ENCODE measurements at regions of chr3 and their contacts with region 1.

Region 1: DNA sequence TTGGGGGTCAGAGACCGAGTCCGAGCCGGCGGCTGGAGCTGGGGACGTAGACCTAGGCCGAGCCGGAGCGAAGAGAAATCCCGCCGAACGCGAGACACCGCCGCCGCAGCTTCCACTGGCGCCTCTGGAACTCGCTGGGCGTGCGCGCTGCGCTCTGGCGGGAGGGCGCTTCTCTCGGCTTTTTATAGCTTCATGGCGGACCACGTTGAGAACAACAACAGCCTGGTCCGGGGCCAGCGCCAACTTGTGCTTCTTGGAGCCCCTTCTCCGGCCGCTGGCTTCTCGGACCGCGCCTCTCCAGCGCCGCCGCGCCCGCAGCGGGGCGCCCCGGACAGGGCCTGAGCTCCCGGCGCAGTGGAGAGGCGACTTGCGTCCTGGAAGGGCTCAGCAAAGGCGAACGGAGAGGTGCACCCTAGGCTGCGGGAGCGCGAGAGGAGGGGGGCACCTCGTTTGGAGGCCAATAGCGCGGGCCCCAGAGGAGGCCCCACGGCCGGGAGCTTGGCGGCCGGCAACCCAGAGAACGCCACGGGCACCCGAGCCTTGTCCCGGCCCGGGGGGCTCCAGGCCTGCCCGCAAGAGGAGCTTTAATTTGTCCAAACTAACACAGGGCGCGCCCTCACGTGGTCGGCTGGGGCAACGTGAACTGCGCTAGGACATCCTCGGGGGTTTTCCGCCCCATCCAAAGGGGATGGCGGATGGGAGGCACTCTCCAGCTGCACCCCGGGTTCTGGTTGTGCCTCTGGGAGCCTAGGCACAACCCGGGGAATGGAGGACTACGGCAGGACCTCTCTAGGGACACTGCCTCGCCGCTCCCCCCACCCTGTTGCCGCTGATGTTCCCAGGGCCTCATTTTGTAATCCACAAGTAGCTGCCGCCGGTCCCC is 37.7 kb downstream of the HMCES start:
- DNase-seq: peak; percentile 79 to 91
- H3K4me3 ChIP-seq: peak overlapping the region; percentile 92 to 95
- H3K27ac ChIP-seq: peak overlapping the region; percentile 90 to 95
- H3K4me1 ChIP-seq: peaks cover 5 to 28% (median 20%) of the 10 kb centered on the region in 4 donors
- H3K27me3 ChIP-seq: no peaks in the 10 kb centered on the region
- CTCF ChIP-seq: peak; percentile 20 to 46

Region 2: GRCh38 chr3:129039271-129040038 is 276.9 kb before region 1 on chr3:
- intact Hi-C with region 1: no loop called
- DNase-seq: no peak
- H3K4me3 ChIP-seq: no peak overlapping the region
- H3K27ac ChIP-seq: no peak overlapping the region
- H3K4me1 ChIP-seq: peaks cover 0 to 7% (median 0%) of the 10 kb centered on the region in 4 donors
- H3K27me3 ChIP-seq: peaks cover 0 to 17% of the 10 kb centered on the region in 2 donors
- CTCF ChIP-seq: no peak

Region 3: GRCh38 chr3:129278439-129278970 is 37.9 kb before region 1 on chr3 and contains the start of gene HMCES:
- intact Hi-C with region 1: loop called (anchors 5 kb)
- DNase-seq: peak; percentile 92 to 96
- H3K4me3 ChIP-seq: peak within 1 kb of the TSS; percentile 72 to 89
- H3K27ac ChIP-seq: peak within 1 kb of the TSS; percentile 89 to 96
- H3K4me1 ChIP-seq: peaks cover 0 to 32% (median 19%) of the 10 kb centered on the region in 4 donors
- H3K27me3 ChIP-seq: no peaks in the 10 kb centered on the region
- CTCF ChIP-seq: peak in 1 of 2 experiments; percentile 4

Region 4: DNA sequence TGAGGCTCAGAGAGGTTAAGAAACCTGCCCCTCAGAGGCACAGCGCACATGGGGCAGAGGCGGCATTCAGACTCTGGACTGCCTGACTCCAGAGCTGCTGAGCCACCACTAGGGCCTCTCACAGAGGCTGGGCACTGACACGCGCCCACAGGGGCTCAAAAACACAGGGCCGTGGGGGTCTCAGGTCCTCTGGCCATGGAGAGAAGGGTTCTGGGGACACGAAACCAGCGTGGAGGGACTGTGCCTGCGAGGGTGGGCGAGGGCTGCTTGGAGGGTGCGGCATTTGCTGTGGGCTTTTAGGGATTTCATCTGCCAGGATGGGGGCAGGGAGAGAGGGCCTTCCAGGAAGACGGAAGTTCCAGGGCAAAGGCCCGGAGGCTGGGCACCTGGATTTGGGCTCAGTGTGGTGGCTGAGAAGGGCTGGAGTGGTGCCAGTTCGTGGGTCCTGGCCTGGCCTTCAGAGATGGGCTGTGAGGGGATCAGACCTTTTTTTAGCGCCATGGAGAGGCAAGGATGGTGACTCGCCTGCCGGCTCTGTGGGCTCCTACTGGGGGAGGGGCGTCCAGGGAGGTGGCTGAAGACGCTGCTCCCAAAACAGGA is 42.5 kb after region 1 on chr3:
- intact Hi-C with region 1: no loop called
- DNase-seq: no peak
- H3K4me3 ChIP-seq: no peak overlapping the region
- H3K27ac ChIP-seq: no peak overlapping the region
- H3K4me1 ChIP-seq: no peaks in the 10 kb centered on the region
- H3K27me3 ChIP-seq: peaks cover 0 to 18% of the 10 kb centered on the region in 2 donors
- CTCF ChIP-seq: no peak

Region 5: GRCh38 chr3:130386604-130387263 is 1070.4 kb after region 1 on chr3:
- intact Hi-C with region 1: no loop called
- DNase-seq: no peak
- H3K4me3 ChIP-seq: no peak overlapping the region
- H3K27ac ChIP-seq: no peak overlapping the region
- H3K4me1 ChIP-seq: no peaks in the 10 kb centered on the region
- H3K27me3 ChIP-seq: no peaks in the 10 kb centered on the region
- CTCF ChIP-seq: no peak

Region 6: DNA sequence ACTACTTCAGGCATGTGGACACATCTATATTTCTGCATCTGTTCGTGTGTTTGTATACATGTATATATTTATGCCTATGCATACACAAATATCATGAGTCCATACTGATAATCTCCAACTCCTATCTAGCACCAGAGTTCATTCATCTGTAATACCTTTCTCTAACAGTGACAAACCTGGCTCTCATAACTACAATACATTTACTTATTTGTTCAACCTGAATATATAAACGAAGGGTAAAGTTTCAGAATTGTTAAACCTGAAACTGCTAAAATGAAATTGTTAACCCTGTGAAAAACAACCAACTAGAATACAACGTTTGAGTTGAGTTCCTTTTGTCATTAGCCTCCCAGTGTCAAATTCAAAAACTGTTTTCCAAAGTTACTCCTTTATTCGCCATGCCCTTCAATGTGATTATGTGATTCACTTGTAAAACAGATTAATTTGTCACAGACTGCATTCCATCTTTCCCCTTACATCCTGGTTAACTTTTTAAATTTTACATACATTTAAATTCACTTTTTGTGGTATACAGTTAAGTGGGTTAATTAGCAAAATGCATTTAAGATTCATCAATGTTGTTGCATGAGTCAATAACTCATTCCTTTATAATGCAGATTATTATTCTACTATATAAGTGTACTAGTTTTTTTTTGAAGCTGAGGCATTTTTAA is 1371.8 kb after region 1 on chr3:
- intact Hi-C with region 1: no loop called
- DNase-seq: no peak
- H3K4me3 ChIP-seq: no peak overlapping the region
- H3K27ac ChIP-seq: no peak overlapping the region
- H3K4me1 ChIP-seq: no peaks in the 10 kb centered on the region
- H3K27me3 ChIP-seq: no peaks in the 10 kb centered on the region
- CTCF ChIP-seq: no peak